ENCODE measurements at regions of chr9 and their contacts with region 1.

Region 1: DNA sequence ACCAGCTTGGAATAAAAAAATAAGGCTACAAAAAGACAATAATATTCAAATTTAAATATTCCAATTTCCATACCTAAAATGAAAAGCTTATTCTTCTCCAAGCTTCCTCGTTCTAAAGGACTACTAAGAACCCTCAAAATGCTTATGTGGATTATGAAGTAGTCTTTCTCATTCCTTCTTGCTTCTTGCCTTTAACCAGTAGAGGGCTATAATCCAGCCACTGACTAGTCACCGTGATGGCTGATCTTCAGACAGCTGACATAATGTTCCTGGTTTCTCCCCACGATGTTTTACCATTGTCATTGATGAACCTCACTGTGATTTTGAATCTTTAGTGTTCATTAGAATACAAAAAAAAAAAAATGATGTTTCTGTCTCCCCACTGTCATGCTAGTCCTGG is 515.3 kb downstream of the TLE1 start:
- DNase-seq: no peak
- ATAC-seq: no peak
- H3K4me3 Mint-ChIP-seq: no peak overlapping the region
- H3K27ac Mint-ChIP-seq: no peak overlapping the region
- H3K4me1 Mint-ChIP-seq: no peaks in the 10 kb centered on the region
- H3K27me3 Mint-ChIP-seq: no peaks in the 10 kb centered on the region

Region 2: DNA sequence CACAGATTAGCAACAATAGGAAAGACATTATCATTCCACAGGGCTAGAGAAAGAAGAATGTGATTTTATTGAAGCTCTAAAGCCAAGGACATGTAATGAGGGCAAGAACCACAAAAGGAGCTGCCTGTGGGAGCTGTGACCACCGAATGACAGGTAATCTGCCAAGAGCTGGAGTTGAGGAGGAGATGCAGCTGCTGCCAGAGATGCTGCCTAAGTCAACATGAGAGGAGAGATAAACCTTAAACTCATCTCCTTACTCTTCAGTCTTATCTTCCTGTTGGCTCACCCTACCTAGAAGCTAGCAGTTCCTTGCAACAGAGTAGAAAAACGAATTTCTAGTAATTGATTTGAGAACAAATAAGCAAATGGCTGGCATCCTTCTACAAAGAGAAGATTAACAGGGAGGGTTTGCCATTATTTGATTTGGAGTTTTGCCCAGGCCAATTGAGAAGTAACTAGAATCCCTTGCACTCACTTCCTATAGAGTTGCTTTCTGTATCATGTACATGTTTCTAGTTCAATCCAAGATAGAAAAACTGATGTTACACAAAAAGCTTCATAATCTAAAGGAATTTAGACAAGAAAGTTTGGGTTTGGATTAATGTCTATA is 23.9 kb before region 1 on chr9:
- CTCF ChIA-PET with region 1: no interaction called
- POLR2A ChIA-PET with region 1: no interaction called
- intact Hi-C with region 1: loop called in 1 of 2 experiments (anchors 1 kb)
- DNase-seq: no peak
- ATAC-seq: no peak
- H3K4me3 Mint-ChIP-seq: no peak overlapping the region
- H3K27ac Mint-ChIP-seq: no peak overlapping the region
- H3K4me1 Mint-ChIP-seq: no peaks in the 10 kb centered on the region
- H3K27me3 Mint-ChIP-seq: no peaks in the 10 kb centered on the region

Measured in activated CD4-positive, alpha-beta T cell treated with anti-CD3 and anti-CD28 coated beads for 36 hours (primary cell).